Activated CD8-positive, alpha-beta T cell treated with anti-CD3 and anti-CD28 coated beads for 36 hours (primary cell): ENCODE measurements at regions of chr20 and their contacts with region 1.

Region 1: DNA sequence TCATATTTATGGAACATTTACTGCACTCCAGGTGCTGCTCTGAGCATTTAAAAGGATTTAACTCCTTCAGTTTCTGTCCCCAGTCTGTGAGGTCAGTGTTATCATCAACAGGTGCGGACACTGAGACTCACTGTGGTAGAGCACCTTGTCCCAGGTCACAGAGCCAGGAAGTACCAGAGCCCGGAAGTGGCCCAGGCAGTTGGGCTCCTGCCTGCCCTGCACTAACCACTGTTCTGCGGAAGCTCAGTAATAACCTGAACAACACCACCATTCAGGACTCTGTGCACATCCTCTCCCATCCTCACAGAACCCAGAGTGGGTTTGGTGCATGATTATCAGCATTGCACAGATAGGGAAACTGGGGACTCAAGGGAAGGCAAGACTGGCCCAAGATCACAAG is 16.8 kb upstream of the SIRPG start:
- DNase-seq: peak; percentile 75
- ATAC-seq: peak; percentile 70
- H3K4me3 Mint-ChIP-seq: peak overlapping the region; percentile 65
- H3K27ac Mint-ChIP-seq: peak overlapping the region; percentile 95
- H3K4me1 Mint-ChIP-seq: peaks cover 98% of the 10 kb centered on the region
- H3K27me3 Mint-ChIP-seq: no peaks in the 10 kb centered on the region
- CTCF ChIP-seq: no peak

Region 2: DNA sequence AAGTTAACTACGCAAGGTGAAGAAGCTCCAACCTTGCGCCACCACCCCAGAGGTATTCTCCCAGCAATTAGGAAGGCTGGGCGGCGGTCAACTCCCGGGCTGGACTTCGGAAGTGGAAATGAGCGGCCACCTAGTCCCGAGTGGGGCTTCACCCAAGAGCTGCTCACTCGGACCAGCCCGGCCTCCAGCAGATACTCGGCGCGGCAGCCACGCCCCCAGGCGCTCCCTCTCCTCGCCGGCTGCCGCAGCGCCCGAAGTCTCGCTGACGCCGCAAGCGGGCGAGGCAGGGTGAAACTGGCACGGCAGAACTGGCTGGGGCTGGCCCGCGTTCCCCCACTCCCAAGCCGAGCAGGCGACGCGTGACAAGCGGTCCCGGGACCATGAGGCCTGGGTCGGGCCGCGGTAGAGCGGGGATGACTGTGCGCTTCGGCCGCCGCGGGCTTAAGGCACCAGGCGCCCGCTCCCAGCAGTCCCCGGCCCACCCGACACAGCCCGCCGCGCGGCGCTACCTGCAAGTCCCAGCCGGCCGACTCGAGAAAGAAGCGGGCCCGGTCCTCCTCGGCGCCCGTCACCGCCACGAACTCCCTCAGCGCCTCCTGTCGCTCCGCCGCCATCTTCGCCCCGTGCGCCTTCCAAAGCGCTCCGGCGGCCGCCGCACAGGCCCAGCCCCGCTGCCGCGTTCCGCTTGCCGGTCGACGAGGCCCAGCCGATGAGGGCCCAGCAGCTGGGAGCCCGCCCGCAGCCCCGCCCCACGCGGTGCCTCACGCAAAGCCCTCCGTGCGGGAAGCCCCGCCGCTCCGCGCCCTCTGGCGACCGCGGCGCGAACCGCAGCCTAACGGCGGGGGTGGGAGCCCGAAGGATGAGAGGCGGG is 207.9 kb before region 1 on chr20 and contains the start of gene NSFL1C:
- CTCF ChIA-PET with region 1: no interaction called
- POLR2A ChIA-PET with region 1: no interaction called
- intact Hi-C with region 1: no loop called
- DNase-seq: peak; percentile 96
- ATAC-seq: peak; percentile 97
- H3K4me3 Mint-ChIP-seq: peak within 1 kb of the TSS; percentile 83
- H3K27ac Mint-ChIP-seq: peak within 1 kb of the TSS; percentile 79
- H3K4me1 Mint-ChIP-seq: peaks cover 46% of the 10 kb centered on the region
- H3K27me3 Mint-ChIP-seq: peaks cover 4% of the 10 kb centered on the region
- CTCF ChIP-seq: peak; percentile 100
- total RNA-seq, gene NSFL1C: 67.2 to 67.9 TPM

Region 3: GRCh38 chr20:1619861-1620444 is 54.4 kb before region 1 on chr20 and contains the start of gene SIRPB1:
- CTCF ChIA-PET with region 1: no interaction called
- POLR2A ChIA-PET with region 1: no interaction called
- intact Hi-C with region 1: no loop called
- DNase-seq: peak; percentile 41
- ATAC-seq: peak; percentile 37
- H3K4me3 Mint-ChIP-seq: no peak within 1 kb of the TSS
- H3K27ac Mint-ChIP-seq: peak within 1 kb of the TSS; percentile 43
- H3K4me1 Mint-ChIP-seq: peaks cover 58% of the 10 kb centered on the region
- H3K27me3 Mint-ChIP-seq: no peaks in the 10 kb centered on the region
- CTCF ChIP-seq: no peak
- total RNA-seq, gene SIRPB1: 0.83 to 0.92 TPM

Region 4: GRCh38 chr20:1663917-1664316 is 10.4 kb before region 1 on chr20:
- CTCF ChIA-PET with region 1: no interaction called
- POLR2A ChIA-PET with region 1: interaction called, 21 read pairs
- intact Hi-C with region 1: no loop called
- DNase-seq: peak; percentile 45
- ATAC-seq: peak; percentile 40
- H3K4me3 Mint-ChIP-seq: peak overlapping the region; percentile 69
- H3K27ac Mint-ChIP-seq: peak overlapping the region; percentile 96
- H3K4me1 Mint-ChIP-seq: peaks cover 90% of the 10 kb centered on the region
- H3K27me3 Mint-ChIP-seq: no peaks in the 10 kb centered on the region
- CTCF ChIP-seq: no peak